ENCODE measurements at regions of chr1 and their contacts with region 1.

Region 1: DNA sequence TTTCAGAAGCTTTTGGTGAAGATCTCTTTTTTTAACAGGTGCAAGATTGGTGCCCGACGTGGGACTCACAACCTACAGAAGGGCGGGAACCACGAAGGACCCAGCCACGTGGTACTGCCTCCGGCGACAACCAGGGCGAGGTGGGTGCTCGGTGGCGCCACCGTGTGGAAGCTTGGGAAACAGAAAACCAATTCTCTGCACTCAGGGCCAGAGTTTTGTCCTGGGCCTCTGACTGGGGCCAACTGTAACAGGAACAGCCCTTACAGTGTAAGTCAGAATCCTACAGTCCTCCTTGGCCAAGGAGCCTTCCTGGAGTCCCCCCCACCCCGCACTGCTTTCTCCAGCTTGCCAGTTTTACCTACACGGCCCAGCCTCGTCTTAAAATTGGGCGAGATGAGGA is 11.6 kb upstream of the S100A7A start:
- DNase-seq: peak; percentile 61
- ATAC-seq: peak; percentile 63
- H3K4me3 Mint-ChIP-seq: no peak overlapping the region
- H3K27ac Mint-ChIP-seq: no peak overlapping the region
- H3K4me1 Mint-ChIP-seq: peaks cover 5% of the 10 kb centered on the region
- H3K27me3 Mint-ChIP-seq: peaks cover 14% of the 10 kb centered on the region

Region 2: DNA sequence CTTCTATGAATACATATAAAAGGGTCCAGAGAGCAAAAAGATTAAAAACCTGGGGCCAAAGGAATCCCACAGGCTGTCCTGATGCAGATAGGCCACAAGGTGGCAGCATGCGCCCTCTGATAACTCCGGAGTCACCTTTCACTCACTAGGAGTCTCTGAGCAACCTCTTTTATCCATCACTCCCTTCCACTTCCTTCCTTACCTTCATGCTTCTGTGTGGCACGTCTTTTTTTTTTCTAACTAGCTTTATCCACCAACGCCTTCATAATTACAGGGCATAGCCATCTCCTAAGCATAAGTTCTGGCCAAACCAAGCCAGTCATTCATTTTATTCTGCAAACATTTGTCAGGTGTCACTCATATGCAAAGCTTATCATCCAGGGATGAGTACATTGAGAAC is 52.2 kb before region 1 on chr1:
- CTCF ChIA-PET with region 1: interaction called, 26 read pairs
- POLR2A ChIA-PET with region 1: no interaction called
- DNase-seq: peak; percentile 78
- ATAC-seq: peak; percentile 68
- H3K4me3 Mint-ChIP-seq: no peak overlapping the region
- H3K27ac Mint-ChIP-seq: no peak overlapping the region
- H3K4me1 Mint-ChIP-seq: peaks cover 5% of the 10 kb centered on the region
- H3K27me3 Mint-ChIP-seq: peaks cover 33% of the 10 kb centered on the region

Region 3: GRCh38 chr1:153415850-153416570 is 11.2 kb after region 1 on chr1 and contains the start of gene S100A7A:
- CTCF ChIA-PET with region 1: no interaction called
- POLR2A ChIA-PET with region 1: no interaction called
- DNase-seq: no peak
- ATAC-seq: no peak
- H3K4me3 Mint-ChIP-seq: no peak within 1 kb of the TSS
- H3K27ac Mint-ChIP-seq: no peak within 1 kb of the TSS
- H3K4me1 Mint-ChIP-seq: no peaks in the 10 kb centered on the region
- H3K27me3 Mint-ChIP-seq: no peaks in the 10 kb centered on the region
- total RNA-seq, gene S100A7A: not detected

Region 4: DNA sequence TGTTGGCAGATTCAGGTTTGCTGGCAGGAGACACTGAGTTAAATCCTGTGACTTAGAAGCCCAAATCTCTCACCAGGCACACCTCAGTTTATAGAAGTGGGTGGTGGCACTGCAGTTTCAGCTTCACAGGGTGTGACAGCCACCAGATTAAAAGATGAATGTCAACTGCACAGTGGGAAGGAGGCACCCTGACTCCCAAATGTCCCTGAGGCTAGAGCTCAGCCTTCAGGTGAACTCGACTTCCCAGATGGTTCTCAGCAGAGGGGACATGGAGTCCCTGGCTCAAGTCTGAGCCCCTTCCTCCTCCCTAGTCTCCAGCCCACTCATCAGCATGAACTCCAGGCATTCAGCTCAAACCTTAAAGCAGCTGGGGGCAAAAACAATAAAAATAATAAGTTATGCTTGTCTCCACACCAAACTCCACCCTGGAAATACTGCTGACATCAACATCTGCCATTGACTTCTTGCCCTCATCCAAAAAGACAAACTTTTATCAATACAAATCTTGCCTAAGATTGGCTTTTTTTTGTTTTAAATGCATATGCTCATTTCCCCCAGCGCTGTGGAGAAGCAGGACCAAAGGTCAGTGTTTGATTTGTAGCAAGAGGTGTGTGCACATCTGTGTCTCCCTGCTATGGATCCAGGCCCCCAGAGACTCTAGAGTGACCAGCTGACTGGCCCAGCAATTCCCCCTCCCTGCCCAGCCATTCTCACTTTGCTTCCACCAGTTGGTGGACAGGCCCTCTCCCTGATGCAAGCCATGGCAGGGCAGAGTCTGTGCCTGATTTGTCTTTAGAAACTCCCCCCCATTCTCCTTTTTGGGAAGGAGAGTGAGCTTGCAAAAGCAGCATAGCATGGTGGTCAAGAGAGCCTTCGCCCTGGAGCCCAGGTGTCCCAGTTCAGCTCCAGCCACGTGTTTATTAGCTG is 74.2 kb after region 1 on chr1:
- CTCF ChIA-PET with region 1: no interaction called
- POLR2A ChIA-PET with region 1: no interaction called
- DNase-seq: no peak
- ATAC-seq: no peak
- H3K4me3 Mint-ChIP-seq: no peak overlapping the region
- H3K27ac Mint-ChIP-seq: no peak overlapping the region
- H3K4me1 Mint-ChIP-seq: no peaks in the 10 kb centered on the region
- H3K27me3 Mint-ChIP-seq: peaks cover 35% of the 10 kb centered on the region

Region 5: GRCh38 chr1:153608742-153609584 is 204.2 kb after region 1 on chr1:
- CTCF ChIA-PET with region 1: no interaction called
- POLR2A ChIA-PET with region 1: no interaction called
- DNase-seq: no peak
- ATAC-seq: no peak
- H3K4me3 Mint-ChIP-seq: no peak overlapping the region
- H3K27ac Mint-ChIP-seq: no peak overlapping the region
- H3K4me1 Mint-ChIP-seq: no peaks in the 10 kb centered on the region
- H3K27me3 Mint-ChIP-seq: no peaks in the 10 kb centered on the region